Dorsolateral prefrontal cortex (tissue), 120 donors: ENCODE measurements at regions of chr2 and their contacts with region 1.

Region 1: DNA sequence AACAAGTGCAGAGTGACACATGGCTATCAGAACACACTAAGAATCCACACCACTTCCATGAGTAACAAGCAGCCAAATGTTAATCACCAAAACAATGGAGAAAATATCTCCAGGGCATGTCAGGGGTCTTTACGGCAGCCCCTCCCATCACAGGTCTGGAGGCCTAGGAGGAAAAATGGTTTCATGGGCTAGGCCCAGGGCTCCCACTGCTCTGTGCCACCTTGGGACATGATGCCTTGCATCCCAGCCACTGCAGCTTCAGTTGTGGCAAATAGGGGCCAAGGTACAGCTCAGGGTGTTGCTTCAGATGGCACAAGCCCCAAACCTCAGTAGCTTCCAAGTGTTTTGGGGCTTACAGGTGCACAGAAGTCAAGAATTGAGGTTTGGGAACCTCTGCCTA is 66.6 kb downstream of the NEURL3 start:
- DNase-seq: no peak
- H3K4me3 ChIP-seq: no peak overlapping the region
- H3K27ac ChIP-seq: no peak overlapping the region
- H3K27me3 ChIP-seq: no peaks in the 10 kb centered on the region
- CTCF ChIP-seq: no peak

Region 2: GRCh38 chr2:96225016-96225533 is 213.5 kb before region 1 on chr2:
- intact Hi-C with region 1: no loop called
- DNase-seq: no peak
- H3K4me3 ChIP-seq: no peak overlapping the region
- H3K27ac ChIP-seq: peak overlapping the region in 9 of 59 donors; percentile 2 to 60 (median 25)
- H3K27me3 ChIP-seq: no peaks in the 10 kb centered on the region
- CTCF ChIP-seq: no peak

Region 3: DNA sequence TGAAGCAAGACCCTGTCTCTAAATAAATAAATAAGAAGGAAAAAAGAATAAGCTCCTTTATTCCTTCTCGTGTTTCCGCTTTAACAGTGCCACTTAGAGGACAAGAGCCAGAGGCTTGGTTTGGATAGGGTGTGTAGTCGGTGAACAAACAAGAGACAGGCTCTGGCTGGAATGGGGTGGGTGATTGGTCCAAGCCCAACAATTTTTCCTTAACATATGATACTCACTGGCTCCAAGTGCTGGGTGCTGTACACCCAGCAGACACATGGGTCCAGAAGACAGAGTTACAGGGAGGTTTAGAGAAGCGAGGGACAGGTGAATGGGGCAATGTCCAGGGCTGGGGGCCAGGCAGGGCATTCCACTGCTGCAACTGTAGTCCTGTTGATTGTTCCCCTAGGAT is 25.3 kb before region 1 on chr2:
- intact Hi-C with region 1: loop called in 1 of 2 experiments (anchors 2 kb)
- DNase-seq: no peak
- H3K4me3 ChIP-seq: peak overlapping the region in 58 of 59 donors; percentile 34 to 75 (median 54)
- H3K27ac ChIP-seq: peak overlapping the region in 36 of 59 donors; percentile 5 to 81 (median 40)
- H3K27me3 ChIP-seq: no peaks in the 10 kb centered on the region
- CTCF ChIP-seq: peak in 23 of 56 donors; percentile 7 to 49 (median 27)

Region 4: DNA sequence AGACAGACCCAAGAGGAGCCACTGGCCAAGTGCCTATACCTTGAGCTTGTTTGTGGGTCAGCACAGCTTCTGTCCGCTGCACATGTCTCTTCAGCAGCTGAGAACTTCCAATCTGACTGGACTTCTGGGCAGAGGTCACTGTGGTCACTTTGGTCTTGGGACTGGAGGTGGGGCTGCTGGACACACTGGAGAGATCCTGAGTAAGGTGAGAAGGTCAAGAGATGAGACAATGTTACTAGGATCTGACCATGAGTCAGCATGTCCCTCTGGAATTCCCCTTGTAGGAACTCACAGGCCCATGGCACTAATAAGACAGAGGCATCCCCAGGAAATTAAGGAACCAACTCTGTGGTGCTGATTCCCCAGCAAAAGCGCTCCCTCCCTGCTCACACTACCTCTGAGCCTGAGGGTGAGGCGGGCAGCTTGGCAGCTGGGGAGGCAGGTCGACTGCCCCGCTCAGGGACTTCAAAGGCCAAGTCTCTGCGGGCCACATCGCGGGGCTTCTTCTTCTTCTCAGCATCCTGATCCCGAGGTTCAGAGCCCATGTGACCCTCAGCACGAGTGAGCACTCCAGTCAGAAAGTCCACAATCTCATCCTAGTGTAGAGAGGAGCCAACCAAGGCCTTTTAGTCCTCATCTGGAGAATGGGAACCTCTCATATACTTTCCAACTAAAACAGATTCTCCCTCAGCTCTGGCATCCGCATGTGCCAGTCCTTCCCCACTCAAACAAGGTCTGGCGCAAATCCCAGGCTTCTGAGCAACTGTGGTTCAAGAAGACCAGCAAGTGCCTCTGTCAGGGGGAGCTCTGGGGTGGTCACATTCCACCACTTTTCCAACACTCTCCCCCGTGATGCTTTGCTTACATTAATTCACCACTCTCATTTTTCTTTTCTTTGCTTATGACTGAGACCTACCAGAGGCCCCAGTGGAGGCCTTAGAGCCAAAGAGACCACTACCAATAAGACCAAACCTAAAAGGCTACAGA is 170.2 kb after region 1 on chr2:
- intact Hi-C with region 1: no loop called
- DNase-seq: no peak
- H3K4me3 ChIP-seq: no peak overlapping the region
- H3K27ac ChIP-seq: peak overlapping the region in 2 of 59 donors; percentile 18 to 21
- H3K27me3 ChIP-seq: no peaks in the 10 kb centered on the region
- CTCF ChIP-seq: no peak